ENCODE measurements at regions of chr1 and their contacts with region 1.

Region 1: GRCh38 chr1:27858072-27858958 is 14.0 kb upstream of the THEMIS2 start:
- DNase-seq: peak; percentile 73 to 84
- ATAC-seq: peak; percentile 87 to 95 (median 89)
- H3K4me3 ChIP-seq: peak overlapping the region in 1 of 10 donors; percentile 22
- H3K27ac ChIP-seq: peak overlapping the region in 1 of 10 donors; percentile 77
- H3K4me1 ChIP-seq: peaks cover 0 to 34% (median 7%) of the 10 kb centered on the region in 9 donors
- H3K27me3 ChIP-seq: no peaks in the 10 kb centered on the region
- CTCF ChIP-seq: peak; percentile 76 to 99 (median 87)

Region 2: DNA sequence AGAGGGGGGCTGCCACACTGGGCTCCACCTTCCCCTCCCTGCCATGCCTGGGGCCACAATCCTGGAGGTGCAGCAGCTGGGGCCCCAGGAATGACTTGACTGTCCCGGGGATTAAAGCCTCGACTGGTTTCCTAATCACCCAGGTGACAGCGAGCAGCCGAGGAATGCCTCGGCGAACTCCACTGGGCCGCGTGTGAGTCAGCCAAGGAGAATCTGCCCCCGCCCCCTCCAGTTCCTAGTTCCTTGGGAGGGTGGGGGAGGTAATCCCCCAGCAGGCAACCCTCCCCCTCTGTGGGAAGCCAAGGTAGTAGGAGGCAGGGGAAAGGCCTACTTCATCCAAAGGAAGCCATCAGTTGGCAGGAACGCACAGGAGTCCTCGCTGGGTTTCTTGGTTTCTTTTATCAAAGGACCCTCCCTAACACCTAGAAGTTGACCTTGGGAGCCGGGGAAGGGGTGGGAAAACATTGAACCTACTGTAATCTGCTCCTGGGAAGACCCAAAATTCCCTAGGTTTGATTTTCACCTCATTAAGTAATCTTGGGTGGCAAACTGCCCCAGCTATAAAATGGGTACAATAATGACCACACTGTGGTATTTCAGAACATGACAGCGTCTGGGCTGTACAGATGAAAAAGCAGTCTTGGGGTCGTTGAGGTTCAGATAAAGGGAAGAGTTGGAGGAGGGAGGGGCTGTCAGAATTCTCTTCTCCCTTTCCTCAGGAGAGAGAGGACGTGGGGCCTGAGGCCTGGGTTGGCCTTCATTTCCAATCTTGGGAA is 847.1 kb before region 1 on chr1:
- intact Hi-C with region 1: no loop called
- DNase-seq: no peak
- ATAC-seq: no peak
- H3K4me3 ChIP-seq: peak overlapping the region in 8 of 10 donors; percentile 3 to 64 (median 52)
- H3K27ac ChIP-seq: peak overlapping the region in 9 of 10 donors; percentile 34 to 84 (median 72)
- H3K4me1 ChIP-seq: peaks cover 5 to 56% (median 27%) of the 10 kb centered on the region in 9 donors
- H3K27me3 ChIP-seq: peaks cover 0 to 11% (median 0%) of the 10 kb centered on the region in 7 donors
- CTCF ChIP-seq: no peak

Region 3: GRCh38 chr1:27816921-27817630 is 41.2 kb before region 1 on chr1:
- intact Hi-C with region 1: no loop called
- DNase-seq: peak in 1 of 2 donors; percentile 26
- ATAC-seq: peak in 7 of 8 donors; percentile 61 to 92 (median 81)
- H3K4me3 ChIP-seq: no peak overlapping the region
- H3K27ac ChIP-seq: peak overlapping the region in 6 of 10 donors; percentile 4 to 67 (median 22)
- H3K4me1 ChIP-seq: peaks cover 0 to 18% (median 7%) of the 10 kb centered on the region in 9 donors
- H3K27me3 ChIP-seq: no peaks in the 10 kb centered on the region
- CTCF ChIP-seq: no peak

Region 4: DNA sequence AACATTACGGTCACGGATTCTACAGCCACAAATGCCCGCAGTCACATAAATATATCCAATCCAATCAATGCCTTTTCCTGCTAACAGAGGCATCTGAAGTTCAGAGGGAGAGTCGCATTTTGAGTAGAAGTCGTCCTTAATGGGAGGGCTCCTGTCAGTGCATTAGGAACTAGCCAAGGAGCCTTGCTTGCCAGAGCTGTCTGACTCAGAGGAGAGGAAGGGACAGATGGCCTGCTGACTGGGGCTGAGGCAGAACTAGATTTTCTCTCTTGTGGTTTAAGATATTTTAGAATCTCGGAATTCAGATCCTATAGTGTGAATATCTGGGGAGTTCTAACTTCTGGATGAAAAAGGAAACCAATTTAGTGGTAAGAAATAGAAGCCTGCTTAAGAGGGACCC is 112.1 kb after region 1 on chr1:
- intact Hi-C with region 1: loop called in 7 of 10 experiments (anchors 5 to 10 kb)
- DNase-seq: peak in 1 of 2 donors; percentile 36
- ATAC-seq: peak in 6 of 8 donors; percentile 46 to 76 (median 68)
- H3K4me3 ChIP-seq: no peak overlapping the region
- H3K27ac ChIP-seq: peak overlapping the region in 4 of 10 donors; percentile 17 to 49 (median 29)
- H3K4me1 ChIP-seq: peaks cover 3 to 39% (median 17%) of the 10 kb centered on the region in 9 donors
- H3K27me3 ChIP-seq: no peaks in the 10 kb centered on the region
- CTCF ChIP-seq: no peak

Region 5: GRCh38 chr1:27979151-27979858 is 121.0 kb after region 1 on chr1:
- intact Hi-C with region 1: loop called (anchors 1 to 10 kb)
- DNase-seq: no peak
- ATAC-seq: peak in 6 of 8 donors; percentile 71 to 78 (median 74)
- H3K4me3 ChIP-seq: no peak overlapping the region
- H3K27ac ChIP-seq: peak overlapping the region in 3 of 10 donors; percentile 9 to 61 (median 38)
- H3K4me1 ChIP-seq: peaks cover 0 to 20% (median 13%) of the 10 kb centered on the region in 9 donors
- H3K27me3 ChIP-seq: no peaks in the 10 kb centered on the region
- CTCF ChIP-seq: peak; percentile 14 to 65 (median 57)

Region 6: DNA sequence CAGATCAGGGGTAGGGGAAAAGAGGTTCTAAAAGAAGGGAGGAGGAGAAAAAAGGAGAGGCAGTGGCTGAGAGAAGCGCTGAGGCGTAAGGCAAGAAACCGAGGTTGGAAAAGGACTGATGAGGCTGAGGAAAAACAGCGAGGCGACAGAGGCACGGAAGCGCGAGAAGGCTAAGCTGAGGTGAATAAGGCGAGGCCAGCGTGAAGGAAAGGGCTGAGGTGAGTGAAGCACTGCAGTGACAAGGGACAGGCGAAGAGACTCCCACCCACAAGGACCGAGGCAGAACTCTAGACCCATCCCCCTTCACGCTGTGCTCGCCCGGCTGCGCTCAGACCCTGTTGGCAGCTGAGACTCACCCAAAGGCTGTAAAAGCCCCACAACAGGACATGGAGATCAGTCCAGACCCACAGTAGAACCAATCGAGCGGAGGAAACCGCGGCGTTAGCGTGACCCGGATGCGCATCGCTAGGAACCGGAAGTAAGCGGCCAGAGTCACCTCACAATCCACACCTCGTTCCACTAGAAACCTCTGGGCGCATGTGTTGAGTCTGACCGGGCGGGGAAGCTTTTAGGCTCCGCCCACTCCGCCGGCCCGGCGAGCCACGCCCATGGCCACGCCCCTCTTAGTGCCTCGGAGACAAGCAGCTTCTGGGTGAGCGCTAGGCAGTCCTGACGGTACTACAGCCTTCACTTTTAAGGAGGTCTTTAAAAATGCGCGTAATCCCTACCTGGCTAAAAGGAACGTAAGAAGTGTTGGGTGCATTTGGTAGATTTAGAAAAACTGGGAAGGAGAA is 230.1 kb after region 1 on chr1 and contains the start of gene EYA3:
- intact Hi-C with region 1: loop called in 1 of 10 experiments (anchors 5 kb)
- DNase-seq: peak; percentile 97 to 98
- ATAC-seq: peak; percentile 99 to 100 (median 100)
- H3K4me3 ChIP-seq: peak within 1 kb of the TSS; percentile 35 to 94 (median 80)
- H3K27ac ChIP-seq: peak within 1 kb of the TSS; percentile 48 to 94 (median 86)
- H3K4me1 ChIP-seq: peaks cover 0 to 45% (median 33%) of the 10 kb centered on the region in 9 donors
- H3K27me3 ChIP-seq: peaks cover 0 to 8% (median 0%) of the 10 kb centered on the region in 7 donors
- CTCF ChIP-seq: no peak
- total RNA-seq, gene EYA3: 15.2 to 22.1 (median 17.7) TPM

Region 7: DNA sequence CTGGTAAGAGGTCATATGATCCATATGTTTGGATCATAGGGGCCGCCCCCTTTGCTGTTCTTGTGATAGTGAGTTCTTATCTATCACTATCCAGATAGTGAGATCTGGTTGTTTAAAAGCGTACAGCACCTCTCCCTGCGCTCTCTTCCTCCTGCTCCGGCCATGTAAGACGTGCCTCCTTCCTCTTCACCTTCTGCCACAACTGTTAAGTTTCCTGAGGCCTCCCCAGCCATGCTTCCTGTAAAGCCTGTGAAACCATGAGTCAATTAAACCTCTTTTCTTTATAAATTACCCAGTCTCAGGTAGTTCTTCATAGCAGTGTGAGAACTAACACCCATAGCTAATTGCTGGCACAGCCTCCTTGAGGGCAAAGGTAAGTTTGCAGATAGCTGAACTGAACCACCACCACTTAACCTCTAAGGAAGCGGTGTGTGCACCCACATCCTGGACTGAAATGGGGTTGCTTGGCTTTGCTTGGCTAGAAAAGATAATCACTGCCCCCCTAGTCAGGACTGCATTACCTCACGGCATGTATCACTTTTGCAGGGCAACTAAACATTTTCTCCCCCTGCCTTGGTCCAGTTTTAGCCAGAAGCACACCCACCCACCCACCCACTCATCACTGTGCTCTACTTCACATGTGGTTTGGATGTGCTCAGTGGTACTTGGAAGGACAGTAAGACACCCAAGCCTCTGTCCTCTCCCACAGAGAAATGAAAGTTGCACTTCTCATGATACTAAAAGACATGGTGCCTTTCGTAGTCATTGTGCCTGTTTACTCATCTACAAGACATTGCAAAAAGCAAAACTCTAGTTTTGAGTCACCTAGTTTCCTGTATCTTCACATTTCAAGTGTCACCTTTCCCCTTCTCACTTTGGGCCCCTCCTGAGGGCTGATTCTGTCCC is 341.3 kb after region 1 on chr1:
- intact Hi-C with region 1: loop called in 2 of 10 experiments (anchors 10 kb)
- DNase-seq: no peak
- ATAC-seq: peak in 1 of 8 donors; percentile 42
- H3K4me3 ChIP-seq: no peak overlapping the region
- H3K27ac ChIP-seq: peak overlapping the region in 1 of 10 donors; percentile 61
- H3K4me1 ChIP-seq: peaks cover 0 to 22% (median 12%) of the 10 kb centered on the region in 9 donors
- H3K27me3 ChIP-seq: no peaks in the 10 kb centered on the region
- CTCF ChIP-seq: no peak

Region 8: DNA sequence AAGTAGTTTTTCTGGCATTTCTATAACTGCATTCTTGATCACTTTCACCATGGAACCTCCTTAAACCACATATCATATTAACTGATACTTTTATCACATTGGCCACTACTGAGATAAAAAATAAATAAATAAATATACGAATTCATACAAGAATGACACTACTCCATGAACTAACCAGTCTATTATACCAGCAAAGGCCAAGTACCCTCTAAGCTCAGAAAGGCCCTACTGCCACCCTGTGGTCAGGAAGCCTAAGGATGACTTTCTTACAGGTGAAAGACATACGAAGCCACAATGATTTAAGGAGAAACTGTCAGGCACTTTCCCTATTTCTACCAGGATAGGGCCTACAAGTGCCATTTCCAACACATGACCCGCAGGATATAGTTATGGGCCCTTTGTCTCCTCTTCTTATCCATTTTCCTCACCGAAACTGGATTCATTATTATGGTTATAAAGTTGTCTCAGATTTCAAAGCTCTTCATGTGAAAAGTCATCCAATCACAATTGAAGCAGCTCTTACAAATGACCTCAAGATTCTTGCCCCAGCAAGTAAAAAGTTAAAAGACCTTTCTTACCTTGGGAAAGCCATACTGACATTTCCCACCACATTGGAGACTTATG is 350.6 kb after region 1 on chr1:
- intact Hi-C with region 1: loop called in 2 of 10 experiments (anchors 2 to 10 kb)
- DNase-seq: peak in 1 of 2 donors; percentile 52
- ATAC-seq: peak in 7 of 8 donors; percentile 69 to 85 (median 81)
- H3K4me3 ChIP-seq: no peak overlapping the region
- H3K27ac ChIP-seq: no peak overlapping the region
- H3K4me1 ChIP-seq: peaks cover 0 to 7% (median 0%) of the 10 kb centered on the region in 9 donors
- H3K27me3 ChIP-seq: no peaks in the 10 kb centered on the region
- CTCF ChIP-seq: peak; percentile 41 to 81 (median 75)

Measured in heart right ventricle (tissue), 16 donors.